ENCODE measurements at regions of chrX and their contacts with region 1.

Region 1: GRCh38 chrX:88886917-88887316 is 139.9 kb downstream of the CPXCR1 start:
- DNase-seq: peak; percentile 68
- ATAC-seq: peak; percentile 93
- H3K4me3 ChIP-seq: no peak overlapping the region
- H3K27ac ChIP-seq: no peak overlapping the region
- H3K4me1 ChIP-seq: no peaks in the 10 kb centered on the region
- H3K27me3 ChIP-seq: no peaks in the 10 kb centered on the region
- CTCF ChIP-seq: no peak
- EP300 ChIP-seq: no peak
- POLR2A ChIP-seq: no peak
- RAD21 ChIP-seq: no peak

Region 2: GRCh38 chrX:88838392-88838791 is 48.5 kb before region 1 on chrX:
- CTCF ChIA-PET with region 1: no interaction called
- POLR2A ChIA-PET with region 1: no interaction called
- in situ Hi-C with region 1: no loop called
- intact Hi-C with region 1: loop called (anchors 5 kb)
- DNase-seq: no peak
- ATAC-seq: no peak
- H3K4me3 ChIP-seq: no peak overlapping the region
- H3K27ac ChIP-seq: no peak overlapping the region
- H3K4me1 ChIP-seq: peaks cover 34% of the 10 kb centered on the region
- H3K27me3 ChIP-seq: no peaks in the 10 kb centered on the region
- CTCF ChIP-seq: no peak
- EP300 ChIP-seq: no peak
- POLR2A ChIP-seq: no peak
- RAD21 ChIP-seq: no peak